Activated CD4-positive, alpha-beta T cell treated with anti-CD3 and anti-CD28 coated beads for 36 hours (primary cell): ENCODE measurements at regions of chr4 and their contacts with region 1.

Region 1: DNA sequence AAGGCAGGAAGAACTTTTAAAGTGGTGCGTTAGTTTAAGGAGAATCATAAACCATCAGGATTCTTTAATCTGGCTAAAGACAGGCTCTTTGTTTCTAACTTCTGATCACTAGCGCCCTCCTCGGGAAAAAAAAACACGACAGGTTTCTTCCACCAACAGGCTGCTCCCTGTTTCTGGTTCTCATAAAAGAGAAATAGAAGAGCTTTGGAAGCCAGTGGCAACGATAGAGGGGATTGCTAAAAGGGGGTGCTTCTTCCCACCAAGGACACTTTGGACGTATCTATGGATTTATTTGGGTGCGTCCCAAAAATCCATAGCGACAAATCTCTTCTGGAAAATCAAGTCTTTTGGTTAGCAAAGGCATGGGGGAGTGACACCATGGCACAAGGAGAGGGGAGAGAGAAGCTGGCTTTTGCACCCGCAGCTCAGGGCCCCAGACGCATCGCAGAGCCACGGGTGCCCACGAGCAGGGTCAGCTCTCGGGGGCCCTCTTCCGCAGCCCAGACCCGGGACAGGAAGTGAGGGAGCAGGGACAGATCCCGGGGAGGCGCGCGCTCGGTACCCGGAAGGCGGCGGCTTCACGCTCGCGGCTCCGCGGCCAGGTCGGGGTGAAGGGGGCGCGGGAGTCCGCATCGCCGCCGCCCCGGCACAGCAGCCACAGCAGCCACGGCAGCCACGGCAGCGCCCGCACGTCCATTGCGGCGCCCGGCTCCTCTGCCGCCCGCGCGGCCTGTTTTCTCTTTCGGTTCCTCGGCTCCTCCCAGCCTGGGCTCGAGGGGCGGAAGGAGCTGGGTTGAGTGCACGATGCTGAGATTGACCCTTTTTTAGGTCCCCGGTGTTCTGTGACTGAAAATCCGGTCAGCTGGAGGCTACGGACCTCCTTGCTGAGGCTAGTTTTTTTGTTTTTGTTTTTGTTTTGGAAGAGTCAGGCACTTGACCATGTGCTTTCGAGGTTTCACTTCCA is at the start of gene CTSO:
- DNase-seq: peak; percentile 82
- ATAC-seq: peak; percentile 93
- H3K4me3 Mint-ChIP-seq: peak within 1 kb of the TSS; percentile 92
- H3K27ac Mint-ChIP-seq: peak within 1 kb of the TSS; percentile 99
- H3K4me1 Mint-ChIP-seq: peaks cover 11% of the 10 kb centered on the region
- H3K27me3 Mint-ChIP-seq: peaks cover 4% of the 10 kb centered on the region
- total RNA-seq, gene CTSO: 2.6 to 3.0 TPM

Region 2: DNA sequence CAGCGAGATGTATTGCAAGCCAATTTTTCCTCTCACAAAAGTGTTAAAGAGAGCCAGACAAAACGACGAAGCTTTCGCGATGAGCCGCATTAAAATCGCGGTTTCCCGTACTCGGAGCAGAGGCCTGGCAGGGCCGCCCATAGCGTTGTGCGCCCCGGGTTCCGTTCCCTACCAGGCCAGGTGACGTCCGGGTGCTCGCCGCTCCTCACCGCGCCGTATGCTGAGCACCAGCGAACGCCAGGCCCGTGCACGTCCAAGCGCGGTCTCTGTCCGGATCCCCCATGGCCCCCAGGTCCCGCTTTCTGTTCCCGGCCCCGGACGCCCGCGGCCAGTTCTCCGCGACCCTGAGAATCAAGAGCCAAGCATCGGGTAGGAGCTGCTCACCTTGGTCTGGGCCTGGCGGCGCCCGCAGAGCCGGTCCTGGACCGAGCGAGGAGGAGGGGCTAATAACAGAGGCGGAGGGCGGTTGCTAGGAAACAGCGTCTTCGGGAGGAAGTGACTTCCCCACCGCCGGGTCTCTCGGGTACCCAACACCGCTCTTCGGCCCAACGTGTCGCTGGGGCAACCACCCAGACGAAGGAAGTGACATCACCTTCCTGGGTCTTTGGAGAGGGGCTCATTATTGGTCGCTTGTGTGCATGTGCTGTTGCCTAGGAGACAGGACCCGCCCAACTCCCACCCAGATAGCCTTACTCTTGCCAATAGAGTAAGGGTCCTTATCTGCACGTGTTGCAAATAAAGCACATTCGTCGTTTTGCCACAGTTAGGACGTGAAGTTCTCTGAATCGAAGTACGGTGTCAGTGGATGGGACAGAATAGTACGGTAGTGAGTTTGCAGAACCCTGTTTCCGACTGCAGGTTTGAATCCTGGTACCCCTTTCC is 576.8 kb before region 1 on chr4 and contains the start of gene MAP9:
- CTCF ChIA-PET with region 1: no interaction called
- POLR2A ChIA-PET with region 1: no interaction called
- intact Hi-C with region 1: loop called in 1 of 2 experiments (anchors 1 kb)
- DNase-seq: peak; percentile 94
- ATAC-seq: peak; percentile 96
- H3K4me3 Mint-ChIP-seq: peak within 1 kb of the TSS; percentile 83
- H3K27ac Mint-ChIP-seq: peak within 1 kb of the TSS; percentile 79
- H3K4me1 Mint-ChIP-seq: peaks cover 16% of the 10 kb centered on the region
- H3K27me3 Mint-ChIP-seq: no peaks in the 10 kb centered on the region
- total RNA-seq, gene MAP9: 8.0 to 8.1 TPM

Region 3: GRCh38 chr4:155442267-155443105 is 510.9 kb before region 1 on chr4:
- CTCF ChIA-PET with region 1: no interaction called
- POLR2A ChIA-PET with region 1: no interaction called
- intact Hi-C with region 1: loop called (anchors 1 to 2 kb)
- DNase-seq: peak; percentile 77
- ATAC-seq: peak; percentile 66
- H3K4me3 Mint-ChIP-seq: no peak overlapping the region
- H3K27ac Mint-ChIP-seq: no peak overlapping the region
- H3K4me1 Mint-ChIP-seq: no peaks in the 10 kb centered on the region
- H3K27me3 Mint-ChIP-seq: peaks cover 11% of the 10 kb centered on the region

Region 4: GRCh38 chr4:155529272-155529671 is 424.2 kb before region 1 on chr4:
- CTCF ChIA-PET with region 1: no interaction called
- POLR2A ChIA-PET with region 1: interaction called, 3 read pairs
- intact Hi-C with region 1: loop called in 1 of 2 experiments (anchors 2 kb)
- DNase-seq: peak; percentile 13
- ATAC-seq: no peak
- H3K4me3 Mint-ChIP-seq: no peak overlapping the region
- H3K27ac Mint-ChIP-seq: no peak overlapping the region
- H3K4me1 Mint-ChIP-seq: no peaks in the 10 kb centered on the region
- H3K27me3 Mint-ChIP-seq: no peaks in the 10 kb centered on the region

Region 5: GRCh38 chr4:155559915-155560314 is 393.5 kb before region 1 on chr4:
- CTCF ChIA-PET with region 1: no interaction called
- POLR2A ChIA-PET with region 1: no interaction called
- intact Hi-C with region 1: no loop called
- DNase-seq: no peak
- ATAC-seq: no peak
- H3K4me3 Mint-ChIP-seq: no peak overlapping the region
- H3K27ac Mint-ChIP-seq: no peak overlapping the region
- H3K4me1 Mint-ChIP-seq: no peaks in the 10 kb centered on the region
- H3K27me3 Mint-ChIP-seq: peaks cover 2% of the 10 kb centered on the region

Region 6: GRCh38 chr4:155809835-155810234 is 143.6 kb before region 1 on chr4:
- CTCF ChIA-PET with region 1: interaction called, 30 read pairs
- POLR2A ChIA-PET with region 1: no interaction called
- intact Hi-C with region 1: loop called (anchors 1 kb)
- DNase-seq: peak; percentile 19
- ATAC-seq: peak; percentile 85
- H3K4me3 Mint-ChIP-seq: no peak overlapping the region
- H3K27ac Mint-ChIP-seq: no peak overlapping the region
- H3K4me1 Mint-ChIP-seq: no peaks in the 10 kb centered on the region
- H3K27me3 Mint-ChIP-seq: no peaks in the 10 kb centered on the region

Region 7: GRCh38 chr4:156968479-156968984 is 1015.1 kb after region 1 on chr4:
- CTCF ChIA-PET with region 1: no interaction called
- POLR2A ChIA-PET with region 1: no interaction called
- intact Hi-C with region 1: no loop called
- DNase-seq: peak; percentile 61
- ATAC-seq: peak; percentile 57
- H3K4me3 Mint-ChIP-seq: no peak overlapping the region
- H3K27ac Mint-ChIP-seq: no peak overlapping the region
- H3K4me1 Mint-ChIP-seq: peaks cover 6% of the 10 kb centered on the region
- H3K27me3 Mint-ChIP-seq: peaks cover 48% of the 10 kb centered on the region

Region 8: DNA sequence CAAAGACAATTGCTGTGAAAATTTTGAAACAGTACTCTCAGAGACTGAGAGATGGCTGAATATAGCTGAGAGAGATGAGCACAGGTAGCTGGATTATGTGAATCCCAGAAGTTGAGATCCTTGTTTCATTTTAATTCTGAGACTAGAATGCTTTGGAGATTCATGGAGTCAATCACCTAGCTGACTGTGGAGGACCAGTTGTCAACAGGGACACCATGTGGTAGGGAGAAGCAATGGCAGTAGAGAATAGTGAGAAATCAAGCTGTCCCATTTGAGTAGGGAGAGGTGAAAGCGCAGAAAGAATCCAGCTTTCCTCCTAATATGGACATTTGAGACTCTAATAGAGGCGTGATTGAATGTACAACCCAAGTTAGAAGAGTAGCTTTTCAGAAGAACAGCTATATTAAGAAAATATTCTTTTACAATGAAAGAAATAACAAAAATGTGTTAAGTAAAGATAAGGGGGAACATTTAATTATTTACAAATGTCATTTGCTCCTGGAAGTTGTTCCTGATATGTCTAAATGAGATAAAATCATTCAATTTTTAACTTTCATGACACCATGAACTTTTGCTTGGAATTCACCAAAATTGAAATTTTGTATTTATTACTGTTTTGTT is 1092.2 kb after region 1 on chr4:
- CTCF ChIA-PET with region 1: interaction called, 3 read pairs
- POLR2A ChIA-PET with region 1: no interaction called
- intact Hi-C with region 1: loop called in 1 of 2 experiments (anchors 10 kb)
- DNase-seq: no peak
- ATAC-seq: no peak
- H3K4me3 Mint-ChIP-seq: no peak overlapping the region
- H3K27ac Mint-ChIP-seq: no peak overlapping the region
- H3K4me1 Mint-ChIP-seq: no peaks in the 10 kb centered on the region
- H3K27me3 Mint-ChIP-seq: no peaks in the 10 kb centered on the region

Region 9: GRCh38 chr4:157204634-157205244 is 1251.3 kb after region 1 on chr4:
- CTCF ChIA-PET with region 1: no interaction called
- POLR2A ChIA-PET with region 1: no interaction called
- intact Hi-C with region 1: loop called in 1 of 2 experiments (anchors 10 kb)
- DNase-seq: peak; percentile 57
- ATAC-seq: no peak
- H3K4me3 Mint-ChIP-seq: no peak overlapping the region
- H3K27ac Mint-ChIP-seq: no peak overlapping the region
- H3K4me1 Mint-ChIP-seq: no peaks in the 10 kb centered on the region
- H3K27me3 Mint-ChIP-seq: no peaks in the 10 kb centered on the region